ENCODE measurements at regions of chr4 and their contacts with region 1.

Region 1: GRCh38 chr4:986879-987623 is at the start of gene IDUA:
- DNase-seq: peak; percentile 74
- ATAC-seq: peak; percentile 73
- H3K4me3 ChIP-seq: peak within 1 kb of the TSS; percentile 54 to 75 (median 55)
- H3K27ac ChIP-seq: peak within 1 kb of the TSS; percentile 64
- H3K4me1 ChIP-seq: peaks cover 44% of the 10 kb centered on the region
- H3K27me3 ChIP-seq: peaks cover 0 to 8% of the 10 kb centered on the region in 2 experiments; a peak in 1 of 5 replicates
- CTCF ChIP-seq: peak; percentile 79
- EP300 ChIP-seq: 0 out of 4 replicates have a peak, but pooled peaks of 1 of the 2 experiments have one; percentile 14
- POLR2A ChIP-seq: peak in 1 of 2 experiments; percentile 37; a peak in 2 of 4 replicates
- RAD21 ChIP-seq: peak; percentile 91
- total RNA-seq, gene IDUA: 0.32 and 1.0 TPM in 2 replicates

Region 2: DNA sequence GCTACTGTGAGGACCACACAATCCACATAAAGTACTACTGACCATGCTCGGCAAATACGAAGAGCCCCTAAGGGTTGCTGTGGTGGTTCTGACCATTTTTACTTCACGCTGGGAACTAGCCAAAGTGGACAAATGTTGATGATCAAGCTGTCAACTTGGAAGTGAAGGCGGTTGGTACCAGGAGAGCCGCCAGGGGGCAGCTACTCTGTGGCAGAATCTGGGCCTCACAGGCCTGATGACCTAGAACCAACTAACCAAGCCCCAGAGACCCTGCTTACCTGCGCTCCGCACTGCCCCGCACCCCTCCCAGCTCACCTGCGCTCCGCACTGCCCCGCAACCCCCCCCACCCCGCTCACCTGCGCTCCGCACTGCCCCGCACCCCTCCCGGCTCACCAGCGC is 60.5 kb before region 1 on chr4:
- CTCF ChIA-PET with region 1: interaction called, 5 read pairs
- POLR2A ChIA-PET with region 1: interaction called, 25 read pairs
- in situ Hi-C with region 1: loop called (anchors 5 kb)
- intact Hi-C with region 1: loop called (anchors 1 kb)
- DNase-seq: peak; percentile 24
- ATAC-seq: peak; percentile 24; the same call in 1 of the 3 replicates
- H3K4me3 ChIP-seq: no peak overlapping the region
- H3K27ac ChIP-seq: no peak overlapping the region
- H3K4me1 ChIP-seq: peaks cover 30% of the 10 kb centered on the region
- H3K27me3 ChIP-seq: no peaks in the 10 kb centered on the region; a peak in 1 of 5 replicates
- CTCF ChIP-seq: peak; percentile 52
- EP300 ChIP-seq: no peak
- POLR2A ChIP-seq: no peak
- RAD21 ChIP-seq: 0 out of 2 replicates have a peak, but pooled peaks have one; percentile 13